WTC11 (cell line): ENCODE measurements at regions of chr11 and their contacts with region 1.

Region 1: GRCh38 chr11:126989942-126990715 is 10.4 kb downstream of the KIRREL3 start:
- DNase-seq: peak; percentile 94
- ATAC-seq: peak; percentile 99
- H3K4me3 Mint-ChIP-seq: peak overlapping the region; percentile 8; the same call in 1 of the 2 replicates
- H3K27ac Mint-ChIP-seq: no peak overlapping the region
- H3K4me1 Mint-ChIP-seq: peaks cover 9% of the 10 kb centered on the region; the same call in 1 of the 2 replicates
- H3K27me3 Mint-ChIP-seq: no peaks in the 10 kb centered on the region; the same call in none of the 2 replicates
- CTCF ChIP-seq: peak; percentile 92

Region 2: DNA sequence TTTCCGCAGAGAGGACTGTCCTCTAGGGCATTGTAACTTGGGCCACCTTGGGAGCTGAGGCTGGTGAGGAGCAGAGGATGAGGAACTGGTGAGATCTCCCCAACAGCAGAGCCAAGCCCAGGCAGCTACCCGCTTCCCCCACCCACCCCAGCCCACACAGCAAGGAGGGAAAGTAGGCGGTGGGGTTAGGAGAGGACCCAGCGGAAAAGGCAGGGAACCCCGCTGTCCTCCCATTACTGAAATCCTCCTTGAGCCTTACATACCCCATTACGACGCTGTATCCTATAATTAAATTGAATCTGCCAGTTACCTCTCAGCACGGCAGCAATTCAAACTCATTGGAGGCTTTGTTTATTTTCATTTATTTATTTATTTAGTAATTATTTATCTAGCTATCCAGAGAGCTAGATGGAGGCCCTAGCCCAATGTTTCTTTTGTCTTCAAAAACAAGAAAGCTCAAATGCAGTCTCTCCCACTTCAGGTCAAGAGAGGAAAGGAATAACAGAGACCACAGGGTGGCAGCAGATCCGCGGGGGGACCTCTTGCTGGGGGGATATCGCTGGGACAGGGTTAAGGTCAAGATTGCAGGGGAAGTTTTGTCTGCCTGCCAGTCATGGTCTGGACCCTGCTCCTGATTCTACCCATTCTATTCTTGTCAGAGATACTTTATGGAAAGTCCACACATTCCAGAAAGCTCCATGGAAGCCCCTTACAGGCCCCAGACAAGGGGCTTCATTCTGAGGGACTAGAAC is 416.6 kb before region 1 on chr11:
- CTCF ChIA-PET with region 1: interaction called, 11 read pairs
- POLR2A ChIA-PET with region 1: no interaction called
- DNase-seq: peak; percentile 58
- ATAC-seq: peak; percentile 86
- H3K4me3 Mint-ChIP-seq: no peak overlapping the region
- H3K27ac Mint-ChIP-seq: no peak overlapping the region
- H3K4me1 Mint-ChIP-seq: peaks cover 16% of the 10 kb centered on the region
- H3K27me3 Mint-ChIP-seq: peaks cover 2% of the 10 kb centered on the region
- CTCF ChIP-seq: peak; percentile 32; the same call in 1 of the 2 replicates

Region 3: DNA sequence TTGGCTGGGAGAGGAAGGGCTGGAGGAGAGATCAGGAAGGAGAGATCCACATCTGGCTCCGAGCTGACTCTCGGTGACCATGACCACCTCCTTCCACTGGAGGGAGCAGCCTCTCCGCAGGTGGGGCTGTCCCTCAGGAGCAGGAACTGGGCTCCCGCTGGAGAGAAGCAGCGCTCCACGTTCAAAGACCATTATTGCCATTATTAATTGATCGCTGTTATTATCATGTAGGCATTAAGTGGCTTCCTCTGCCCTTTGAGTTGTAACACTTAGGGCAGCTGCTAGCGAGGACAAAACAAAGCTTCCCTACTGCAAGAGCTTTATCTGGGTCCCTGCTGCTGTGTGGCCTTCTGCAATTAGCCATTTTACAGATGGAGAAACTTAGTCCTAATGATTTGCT is 382.8 kb before region 1 on chr11:
- CTCF ChIA-PET with region 1: interaction called, 29 read pairs
- POLR2A ChIA-PET with region 1: interaction called, 3 read pairs
- DNase-seq: peak; percentile 76
- ATAC-seq: peak; percentile 83
- H3K4me3 Mint-ChIP-seq: peak overlapping the region; percentile 42
- H3K27ac Mint-ChIP-seq: no peak overlapping the region
- H3K4me1 Mint-ChIP-seq: peaks cover 40% of the 10 kb centered on the region
- H3K27me3 Mint-ChIP-seq: peaks cover 6% of the 10 kb centered on the region
- CTCF ChIP-seq: peak; percentile 52

Region 4: DNA sequence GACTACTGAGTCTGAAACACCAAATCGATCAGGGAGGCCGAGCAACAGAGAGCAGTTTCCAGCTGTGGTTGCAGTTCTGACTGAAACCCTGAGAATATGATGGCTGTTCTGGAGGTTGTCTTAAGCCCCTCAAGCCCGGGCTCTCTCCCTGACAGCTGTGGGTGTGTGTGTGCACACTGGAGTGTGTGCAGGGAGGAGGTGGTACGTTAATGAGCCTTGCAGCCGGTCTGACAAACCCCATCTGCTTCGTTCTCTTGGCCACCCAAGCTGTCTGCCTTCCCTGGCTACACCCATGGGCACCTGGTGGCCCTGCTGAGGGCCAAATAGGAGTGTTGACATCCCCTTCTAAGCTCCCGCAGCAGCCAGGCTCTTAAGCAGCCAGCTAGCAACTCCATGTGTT is 179.4 kb before region 1 on chr11:
- CTCF ChIA-PET with region 1: interaction called, 10 read pairs
- POLR2A ChIA-PET with region 1: no interaction called
- DNase-seq: no peak
- ATAC-seq: no peak
- H3K4me3 Mint-ChIP-seq: no peak overlapping the region
- H3K27ac Mint-ChIP-seq: no peak overlapping the region
- H3K4me1 Mint-ChIP-seq: peaks cover 18% of the 10 kb centered on the region
- H3K27me3 Mint-ChIP-seq: peaks cover 15% of the 10 kb centered on the region
- CTCF ChIP-seq: no peak

Region 5: DNA sequence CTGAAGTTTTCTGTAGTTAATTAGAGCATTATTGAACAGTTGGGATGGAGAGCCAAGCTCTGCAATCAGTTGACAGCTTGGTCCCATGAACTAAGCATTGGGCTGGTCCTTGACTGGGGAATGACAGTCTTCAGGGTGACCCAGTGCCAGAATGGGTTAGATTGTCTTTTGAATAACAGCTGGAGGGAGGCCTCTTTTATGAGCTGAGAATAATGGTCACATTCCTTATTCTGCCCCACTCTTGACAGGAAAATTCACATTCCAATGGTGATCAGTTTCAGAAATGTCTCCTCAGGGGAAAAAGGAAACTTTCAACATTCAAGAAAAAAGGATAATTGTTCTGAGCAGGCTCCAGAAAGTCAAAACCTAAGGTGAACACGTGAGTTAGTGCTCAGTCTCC is 103.5 kb before region 1 on chr11:
- CTCF ChIA-PET with region 1: interaction called, 24 read pairs
- POLR2A ChIA-PET with region 1: no interaction called
- DNase-seq: no peak
- ATAC-seq: no peak
- H3K4me3 Mint-ChIP-seq: no peak overlapping the region
- H3K27ac Mint-ChIP-seq: no peak overlapping the region
- H3K4me1 Mint-ChIP-seq: peaks cover 19% of the 10 kb centered on the region
- H3K27me3 Mint-ChIP-seq: no peaks in the 10 kb centered on the region
- CTCF ChIP-seq: no peak

Region 6: GRCh38 chr11:126978911-126979310 is 11.2 kb before region 1 on chr11:
- CTCF ChIA-PET with region 1: interaction called, 79 read pairs
- POLR2A ChIA-PET with region 1: no interaction called
- DNase-seq: no peak
- ATAC-seq: no peak
- H3K4me3 Mint-ChIP-seq: no peak overlapping the region
- H3K27ac Mint-ChIP-seq: peak overlapping the region; percentile 27; the same call in 1 of the 2 replicates
- H3K4me1 Mint-ChIP-seq: peaks cover 39% of the 10 kb centered on the region
- H3K27me3 Mint-ChIP-seq: no peaks in the 10 kb centered on the region
- CTCF ChIP-seq: no peak

Region 7: GRCh38 chr11:127027789-127028188 is 37.7 kb after region 1 on chr11:
- CTCF ChIA-PET with region 1: no interaction called
- POLR2A ChIA-PET with region 1: no interaction called
- DNase-seq: no peak
- ATAC-seq: no peak
- H3K4me3 Mint-ChIP-seq: no peak overlapping the region
- H3K27ac Mint-ChIP-seq: no peak overlapping the region
- H3K4me1 Mint-ChIP-seq: peaks cover 2% of the 10 kb centered on the region; the same call in 1 of the 2 replicates
- H3K27me3 Mint-ChIP-seq: no peaks in the 10 kb centered on the region; the same call in 1 of the 2 replicates
- CTCF ChIP-seq: no peak

Region 8: GRCh38 chr11:127074151-127074761 is 84.1 kb after region 1 on chr11:
- CTCF ChIA-PET with region 1: interaction called, 31 read pairs
- POLR2A ChIA-PET with region 1: no interaction called
- DNase-seq: peak; percentile 36
- ATAC-seq: peak; percentile 93
- H3K4me3 Mint-ChIP-seq: no peak overlapping the region
- H3K27ac Mint-ChIP-seq: no peak overlapping the region
- H3K4me1 Mint-ChIP-seq: peaks cover 16% of the 10 kb centered on the region
- H3K27me3 Mint-ChIP-seq: no peaks in the 10 kb centered on the region
- CTCF ChIP-seq: no peak

Region 9: DNA sequence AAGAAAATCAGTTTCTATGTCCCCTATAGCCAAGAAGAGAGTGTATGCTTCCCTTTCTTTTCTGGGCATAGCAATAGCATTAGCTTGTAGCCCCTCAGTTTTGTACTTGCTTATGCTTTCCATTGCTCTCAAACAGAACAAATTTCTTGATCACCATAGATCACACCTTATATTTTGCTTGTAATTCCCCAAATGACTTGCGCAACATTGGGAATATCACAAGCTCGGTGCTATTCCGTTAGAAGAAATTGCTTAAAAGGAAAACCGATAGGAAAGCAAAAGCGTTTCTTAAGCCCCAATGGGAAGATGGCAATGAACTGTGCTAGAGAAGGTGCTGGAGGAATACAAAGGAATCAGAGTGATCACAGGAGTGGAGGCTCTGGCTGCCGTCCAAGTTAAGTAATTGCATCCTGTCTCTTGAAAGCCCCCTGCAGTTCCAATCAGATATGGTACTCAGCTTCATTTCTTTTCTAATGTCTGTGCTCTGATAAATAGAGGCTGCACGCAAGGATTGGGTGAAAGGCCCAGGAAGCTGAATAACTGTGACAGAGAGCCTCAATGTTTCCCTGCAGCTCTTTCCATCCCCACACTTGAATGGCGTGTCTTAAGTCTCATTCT is 192.6 kb after region 1 on chr11:
- CTCF ChIA-PET with region 1: no interaction called
- POLR2A ChIA-PET with region 1: no interaction called
- DNase-seq: no peak
- ATAC-seq: peak; percentile 58; the same call in 1 of the 2 replicates
- H3K4me3 Mint-ChIP-seq: no peak overlapping the region
- H3K27ac Mint-ChIP-seq: no peak overlapping the region
- H3K4me1 Mint-ChIP-seq: peaks cover 10% of the 10 kb centered on the region
- H3K27me3 Mint-ChIP-seq: no peaks in the 10 kb centered on the region
- CTCF ChIP-seq: no peak